ENCODE measurements at regions of chr4 and their contacts with region 1.

Region 1: GRCh38 chr4:48772556-48772955 is 7.5 kb downstream of the FRYL start:
- DNase-seq: no peak
- ATAC-seq: no peak
- H3K4me3 ChIP-seq: no peak overlapping the region
- H3K27ac ChIP-seq: peak overlapping the region; percentile 82; the same call in 1 of the 2 replicates
- H3K4me1 ChIP-seq: peaks cover 36% of the 10 kb centered on the region
- H3K27me3 ChIP-seq: no peaks in the 10 kb centered on the region
- CTCF ChIP-seq: no peak

Region 2: GRCh38 chr4:46781434-46782092 is 1991.0 kb before region 1 on chr4:
- CTCF ChIA-PET with region 1: no interaction called
- POLR2A ChIA-PET with region 1: no interaction called
- intact Hi-C with region 1: no loop called
- DNase-seq: no peak
- ATAC-seq: no peak
- H3K4me3 ChIP-seq: no peak overlapping the region
- H3K27ac ChIP-seq: no peak overlapping the region
- H3K4me1 ChIP-seq: no peaks in the 10 kb centered on the region
- H3K27me3 ChIP-seq: no peaks in the 10 kb centered on the region
- CTCF ChIP-seq: no peak

Region 3: DNA sequence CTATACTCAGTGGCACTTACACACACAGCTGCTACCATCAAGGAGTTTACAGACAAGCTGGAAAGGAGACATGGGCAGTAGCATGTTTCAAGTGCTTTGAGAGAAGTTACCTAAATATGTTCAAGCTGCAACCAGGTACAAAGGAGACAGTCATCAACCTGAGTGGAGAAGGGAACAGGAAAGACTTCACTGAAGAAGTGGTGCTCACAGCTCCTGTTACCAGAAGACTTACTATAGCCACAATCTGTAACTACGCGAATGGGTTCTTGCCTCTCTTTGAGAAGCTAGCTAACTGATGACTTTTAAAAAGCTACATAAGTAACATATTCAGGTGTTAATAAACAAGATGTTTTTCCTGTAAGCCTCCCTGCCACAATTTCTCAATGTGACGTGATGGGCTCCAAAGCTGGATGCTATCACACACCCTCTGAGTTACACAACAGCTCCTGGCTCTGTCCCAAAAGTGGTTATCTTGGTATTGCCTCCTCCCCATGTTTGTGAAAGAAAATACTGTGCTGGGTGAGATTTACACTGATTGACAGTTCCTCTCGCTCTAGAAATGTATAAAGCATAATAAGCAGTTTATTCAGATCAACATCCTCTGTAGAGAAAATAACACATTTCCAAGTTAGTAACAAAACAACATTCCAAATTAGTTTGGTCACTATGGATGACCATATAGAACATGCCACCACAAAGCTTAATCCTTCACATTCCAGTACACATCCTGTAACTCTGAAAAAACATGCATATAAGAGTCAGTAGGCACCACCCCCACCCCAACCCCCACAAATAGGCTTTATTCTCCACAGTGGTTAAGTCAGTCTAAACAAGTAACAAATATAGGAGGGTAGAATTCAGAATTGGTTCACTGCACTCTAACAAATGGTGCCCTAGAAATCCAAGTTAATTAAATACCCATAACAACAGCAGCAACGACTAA is 74.3 kb before region 1 on chr4:
- CTCF ChIA-PET with region 1: no interaction called
- POLR2A ChIA-PET with region 1: interaction called, 4 read pairs
- intact Hi-C with region 1: loop called (anchors 2 kb)
- DNase-seq: peak; percentile 81
- ATAC-seq: peak; percentile 34
- H3K4me3 ChIP-seq: peak overlapping the region; percentile 53
- H3K27ac ChIP-seq: peak overlapping the region; percentile 89
- H3K4me1 ChIP-seq: peaks cover 37% of the 10 kb centered on the region
- H3K27me3 ChIP-seq: no peaks in the 10 kb centered on the region
- CTCF ChIP-seq: no peak

Measured in PC-3 (cell line).